A673 (cell line): ENCODE measurements at regions of chr11 and their contacts with region 1.

Region 1: DNA sequence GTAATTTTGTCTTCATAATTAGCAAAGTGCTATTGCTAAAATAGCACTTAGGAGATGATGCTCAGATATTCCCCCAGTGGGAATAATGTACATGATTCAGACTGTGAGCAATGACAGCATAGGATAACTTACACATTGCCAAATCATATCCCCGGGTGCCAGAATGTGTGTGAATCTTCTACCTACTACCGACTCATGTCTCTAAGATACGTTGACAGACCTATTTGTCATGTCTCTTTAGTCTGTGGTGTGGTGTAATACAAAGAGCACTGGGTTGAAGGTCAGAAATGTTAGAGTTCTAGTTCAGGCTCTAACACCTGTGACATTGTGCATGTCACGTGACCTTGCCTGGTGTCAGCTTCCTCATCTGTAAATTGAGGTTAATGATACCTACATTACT is 31.0 kb upstream of the PICALM start:
- DNase-seq: no peak
- H3K4me3 ChIP-seq: no peak overlapping the region
- H3K27ac ChIP-seq: no peak overlapping the region
- H3K4me1 ChIP-seq: no peaks in the 10 kb centered on the region
- H3K27me3 ChIP-seq: no peaks in the 10 kb centered on the region
- CTCF ChIP-seq: no peak

Region 2: GRCh38 chr11:85694386-85694980 is 405.4 kb before region 1 on chr11:
- CTCF ChIA-PET with region 1: no interaction called
- POLR2A ChIA-PET with region 1: no interaction called
- intact Hi-C with region 1: no loop called
- DNase-seq: peak; percentile 58
- H3K4me3 ChIP-seq: no peak overlapping the region
- H3K27ac ChIP-seq: no peak overlapping the region
- H3K4me1 ChIP-seq: no peaks in the 10 kb centered on the region
- H3K27me3 ChIP-seq: peaks cover 22% of the 10 kb centered on the region
- CTCF ChIP-seq: peak; percentile 66

Region 3: GRCh38 chr11:86116386-86116726 is 16.5 kb after region 1 on chr11:
- CTCF ChIA-PET with region 1: interaction called, 5 read pairs
- POLR2A ChIA-PET with region 1: interaction called, 13 read pairs
- intact Hi-C with region 1: no loop called
- DNase-seq: no peak
- H3K4me3 ChIP-seq: no peak overlapping the region
- H3K27ac ChIP-seq: no peak overlapping the region
- H3K4me1 ChIP-seq: no peaks in the 10 kb centered on the region
- H3K27me3 ChIP-seq: no peaks in the 10 kb centered on the region
- CTCF ChIP-seq: no peak